CD14-positive monocyte (primary cell): ENCODE measurements at regions of chr6 and their contacts with region 1.

Region 1: GRCh38 chr6:158799051-158799792 is 19.9 kb downstream of the EZR start:
- DNase-seq: no peak
- H3K4me3 ChIP-seq: no peak overlapping the region
- H3K4me3 Mint-ChIP-seq: no peak overlapping the region
- H3K27ac ChIP-seq: peak overlapping the region in 1 of 2 donors; percentile 33
- H3K27ac Mint-ChIP-seq: peak overlapping the region in 3 of 7 donors; percentile 62 to 79 (median 75)
- H3K4me1 ChIP-seq: peaks cover 7 to 11% of the 10 kb centered on the region in 2 donors
- H3K4me1 Mint-ChIP-seq: peaks cover 28% of the 10 kb centered on the region
- H3K27me3 ChIP-seq: no peaks in the 10 kb centered on the region
- H3K27me3 Mint-ChIP-seq: no peaks in the 10 kb centered on the region
- CTCF ChIP-seq: no peak

Region 2: GRCh38 chr6:158972241-158973233 is 173.3 kb after region 1 on chr6:
- intact Hi-C with region 1: loop called in 1 of 2 experiments (anchors 5 kb)
- DNase-seq: peak; percentile 29 to 61 (median 42)
- H3K4me3 ChIP-seq: no peak overlapping the region
- H3K4me3 Mint-ChIP-seq: no peak overlapping the region
- H3K27ac ChIP-seq: no peak overlapping the region
- H3K27ac Mint-ChIP-seq: no peak overlapping the region
- H3K4me1 ChIP-seq: peaks cover 2 to 3% of the 10 kb centered on the region in 2 donors
- H3K4me1 Mint-ChIP-seq: peaks cover 4% of the 10 kb centered on the region
- H3K27me3 ChIP-seq: no peaks in the 10 kb centered on the region
- H3K27me3 Mint-ChIP-seq: no peaks in the 10 kb centered on the region
- CTCF ChIP-seq: peak; percentile 79